ENCODE measurements at regions of chr6 and their contacts with region 1.

Region 1: DNA sequence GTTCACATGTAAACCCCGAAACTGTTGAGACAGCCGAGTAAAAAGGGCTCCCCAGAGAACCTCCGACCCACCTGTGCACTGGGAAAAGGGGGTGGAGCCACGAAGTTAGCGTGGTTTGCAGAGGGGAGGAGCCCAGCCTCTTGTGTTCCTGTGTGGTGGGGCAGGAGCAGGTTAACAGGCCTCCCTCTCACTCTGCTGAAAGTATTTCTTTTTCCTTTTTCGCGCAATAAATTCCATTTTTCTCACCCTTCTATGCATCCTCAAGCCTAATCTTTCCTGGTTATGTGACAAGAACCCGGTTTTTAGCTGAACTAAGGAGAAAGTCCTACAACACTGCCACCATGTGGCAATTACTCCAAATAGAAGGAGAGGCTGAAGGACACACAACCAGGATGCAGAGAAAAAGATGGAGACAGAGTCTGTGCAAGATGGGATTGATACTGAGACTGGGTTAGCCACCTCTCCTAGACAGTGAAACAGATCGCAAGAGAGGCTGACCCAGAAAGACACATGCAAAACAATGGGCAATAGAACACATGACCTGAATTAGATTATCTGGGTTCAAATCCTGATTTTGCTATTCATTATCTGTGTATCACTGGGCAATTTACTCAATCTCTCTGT is 168.7 kb upstream of the PRSS16 start:
- DNase-seq: no peak
- H3K4me3 ChIP-seq: peak overlapping the region in 2 of 4 donors; percentile 19 to 38
- H3K27ac ChIP-seq: no peak overlapping the region
- H3K4me1 ChIP-seq: peaks cover 0 to 7% (median 4%) of the 10 kb centered on the region in 4 donors
- H3K27me3 ChIP-seq: peaks cover 0 to 28% (median 0%) of the 10 kb centered on the region in 4 donors
- CTCF ChIP-seq: peak; percentile 45 to 58 (median 56)
- EP300 ChIP-seq: no peak
- POLR2A ChIP-seq: no peak

Region 2: DNA sequence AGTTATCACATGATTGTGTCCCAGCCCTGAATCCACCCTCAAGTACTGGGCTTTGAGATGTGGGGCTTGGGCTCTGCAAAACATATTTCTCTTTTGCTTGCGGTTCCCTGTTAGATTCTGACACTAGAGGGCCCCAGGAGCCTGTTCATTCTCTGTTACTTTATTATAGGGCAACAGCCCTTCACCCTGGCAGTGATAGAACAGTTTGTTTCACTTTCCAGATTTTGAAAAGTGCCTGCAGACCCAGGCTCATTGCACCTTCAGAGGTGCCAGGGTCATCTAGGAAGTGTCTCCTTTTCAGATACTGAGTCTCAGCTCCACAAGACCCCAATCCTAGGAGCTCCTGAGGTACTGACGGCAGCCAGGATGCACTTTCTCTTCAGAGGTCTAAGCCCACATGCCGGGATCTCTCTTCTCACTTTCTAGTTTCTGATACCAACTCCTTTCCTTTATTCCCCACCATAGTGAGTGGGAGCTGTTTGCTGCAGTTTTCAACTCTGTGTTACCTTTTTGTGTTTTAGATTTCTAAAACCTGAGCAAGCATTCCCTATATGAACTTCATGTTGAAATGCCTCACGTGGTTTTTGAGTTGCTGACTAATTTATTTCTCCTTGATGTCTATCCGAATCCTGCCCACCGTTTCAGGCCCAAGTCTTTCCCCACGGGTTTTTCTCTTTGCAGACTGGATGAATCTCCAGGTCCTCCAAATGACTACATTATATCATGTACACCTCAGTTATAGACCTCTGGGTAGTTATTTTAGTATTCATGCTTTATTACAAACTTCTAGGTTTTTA is 471.2 kb before region 1 on chr6:
- intact Hi-C with region 1: loop called (anchors 5 kb)
- DNase-seq: no peak
- H3K4me3 ChIP-seq: peak overlapping the region in 3 of 4 donors; percentile 19 to 28 (median 22)
- H3K27ac ChIP-seq: no peak overlapping the region
- H3K4me1 ChIP-seq: no peaks in the 10 kb centered on the region
- H3K27me3 ChIP-seq: peaks cover 0 to 16% (median 0%) of the 10 kb centered on the region in 4 donors
- CTCF ChIP-seq: peak; percentile 29 to 60 (median 38)
- EP300 ChIP-seq: no peak
- POLR2A ChIP-seq: no peak

Region 3: GRCh38 chr6:27814660-27815424 is 736.0 kb after region 1 on chr6:
- intact Hi-C with region 1: no loop called
- DNase-seq: no peak
- H3K4me3 ChIP-seq: peak overlapping the region; percentile 43 to 54 (median 44)
- H3K27ac ChIP-seq: peak overlapping the region in 2 of 4 donors; percentile 11 to 39
- H3K4me1 ChIP-seq: peaks cover 3 to 30% (median 19%) of the 10 kb centered on the region in 4 donors
- H3K27me3 ChIP-seq: peaks cover 0 to 66% (median 15%) of the 10 kb centered on the region in 4 donors
- CTCF ChIP-seq: no peak
- EP300 ChIP-seq: no peak
- POLR2A ChIP-seq: no peak